ENCODE measurements at regions of chrX and their contacts with region 1.

Region 1: DNA sequence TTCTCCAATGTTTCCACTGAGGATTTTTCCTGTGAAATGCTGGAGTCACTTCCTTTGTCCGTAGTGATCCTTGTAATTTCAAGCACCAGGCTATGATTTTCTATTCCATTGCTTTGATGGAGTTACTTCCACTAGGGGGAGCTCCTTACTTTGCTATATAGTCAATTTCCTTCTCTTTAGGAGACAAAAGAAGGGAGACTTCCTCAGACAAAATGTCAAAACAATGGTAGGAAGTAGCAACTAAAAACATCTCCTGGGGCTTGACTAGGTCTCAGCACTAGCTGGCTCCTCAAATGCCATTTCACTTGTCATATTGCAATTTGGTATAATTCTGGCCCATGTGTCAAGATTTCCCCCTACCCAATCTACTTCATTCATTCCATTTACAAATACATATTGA is 24.1 kb downstream of the ZCCHC12 start:
- DNase-seq: peak in 2 of 9 experiments; percentile 50 to 61
- ATAC-seq: no peak
- H3K4me3 ChIP-seq: no peak overlapping the region
- H3K4me3 Mint-ChIP-seq: no peak overlapping the region
- H3K27ac ChIP-seq: no peak overlapping the region
- H3K27ac Mint-ChIP-seq: no peak overlapping the region
- H3K4me1 ChIP-seq: no peaks in the 10 kb centered on the region
- H3K4me1 Mint-ChIP-seq: no peaks in the 10 kb centered on the region
- H3K27me3 ChIP-seq: no peaks in the 10 kb centered on the region
- H3K27me3 Mint-ChIP-seq: peaks cover 1% of the 10 kb centered on the region
- CTCF ChIP-seq: peak; percentile 63

Region 2: GRCh38 chrX:119004920-119005524 is 157.3 kb after region 1 on chrX:
- CTCF ChIA-PET with region 1: interaction called, 21 read pairs
- POLR2A ChIA-PET with region 1: interaction called, 3 read pairs
- intact Hi-C with region 1: loop called (anchors 1 kb)
- DNase-seq: peak; percentile 8 to 74 (median 47)
- ATAC-seq: peak; percentile 71
- H3K4me3 ChIP-seq: no peak overlapping the region
- H3K4me3 Mint-ChIP-seq: no peak overlapping the region
- H3K27ac ChIP-seq: no peak overlapping the region
- H3K27ac Mint-ChIP-seq: no peak overlapping the region
- H3K4me1 ChIP-seq: no peaks in the 10 kb centered on the region
- H3K4me1 Mint-ChIP-seq: peaks cover 4% of the 10 kb centered on the region
- H3K27me3 ChIP-seq: no peaks in the 10 kb centered on the region
- H3K27me3 Mint-ChIP-seq: no peaks in the 10 kb centered on the region
- CTCF ChIP-seq: peak; percentile 64

Region 3: GRCh38 chrX:119067023-119067739 is 219.5 kb after region 1 on chrX:
- CTCF ChIA-PET with region 1: interaction called, 6 read pairs
- POLR2A ChIA-PET with region 1: no interaction called
- intact Hi-C with region 1: loop called (anchors 1 to 2 kb)
- DNase-seq: peak in 5 of 9 experiments; percentile 4 to 46 (median 21)
- ATAC-seq: peak; percentile 34
- H3K4me3 ChIP-seq: no peak overlapping the region
- H3K4me3 Mint-ChIP-seq: no peak overlapping the region
- H3K27ac ChIP-seq: no peak overlapping the region
- H3K27ac Mint-ChIP-seq: no peak overlapping the region
- H3K4me1 ChIP-seq: no peaks in the 10 kb centered on the region
- H3K4me1 Mint-ChIP-seq: no peaks in the 10 kb centered on the region
- H3K27me3 ChIP-seq: no peaks in the 10 kb centered on the region
- H3K27me3 Mint-ChIP-seq: no peaks in the 10 kb centered on the region
- CTCF ChIP-seq: no peak

Region 4: GRCh38 chrX:119211649-119212014 is 364.0 kb after region 1 on chrX:
- CTCF ChIA-PET with region 1: no interaction called
- POLR2A ChIA-PET with region 1: no interaction called
- intact Hi-C with region 1: loop called in 1 of 2 experiments (anchors 5 kb)
- DNase-seq: no peak
- ATAC-seq: no peak
- H3K4me3 ChIP-seq: no peak overlapping the region
- H3K4me3 Mint-ChIP-seq: no peak overlapping the region
- H3K27ac ChIP-seq: no peak overlapping the region
- H3K27ac Mint-ChIP-seq: no peak overlapping the region
- H3K4me1 ChIP-seq: no peaks in the 10 kb centered on the region
- H3K4me1 Mint-ChIP-seq: no peaks in the 10 kb centered on the region
- H3K27me3 ChIP-seq: no peaks in the 10 kb centered on the region
- H3K27me3 Mint-ChIP-seq: peaks cover 5% of the 10 kb centered on the region
- CTCF ChIP-seq: no peak

Region 5: GRCh38 chrX:119266364-119266995 is 418.8 kb after region 1 on chrX:
- CTCF ChIA-PET with region 1: no interaction called
- POLR2A ChIA-PET with region 1: no interaction called
- intact Hi-C with region 1: loop called in 1 of 2 experiments (anchors 5 kb)
- DNase-seq: peak in 5 of 9 experiments; percentile 7 to 43 (median 25)
- ATAC-seq: no peak
- H3K4me3 ChIP-seq: no peak overlapping the region
- H3K4me3 Mint-ChIP-seq: no peak overlapping the region
- H3K27ac ChIP-seq: no peak overlapping the region
- H3K27ac Mint-ChIP-seq: no peak overlapping the region
- H3K4me1 ChIP-seq: no peaks in the 10 kb centered on the region
- H3K4me1 Mint-ChIP-seq: no peaks in the 10 kb centered on the region
- H3K27me3 ChIP-seq: no peaks in the 10 kb centered on the region
- H3K27me3 Mint-ChIP-seq: peaks cover 2% of the 10 kb centered on the region
- CTCF ChIP-seq: peak; percentile 61